ENCODE measurements at regions of chr1 and their contacts with region 1.

Region 1: DNA sequence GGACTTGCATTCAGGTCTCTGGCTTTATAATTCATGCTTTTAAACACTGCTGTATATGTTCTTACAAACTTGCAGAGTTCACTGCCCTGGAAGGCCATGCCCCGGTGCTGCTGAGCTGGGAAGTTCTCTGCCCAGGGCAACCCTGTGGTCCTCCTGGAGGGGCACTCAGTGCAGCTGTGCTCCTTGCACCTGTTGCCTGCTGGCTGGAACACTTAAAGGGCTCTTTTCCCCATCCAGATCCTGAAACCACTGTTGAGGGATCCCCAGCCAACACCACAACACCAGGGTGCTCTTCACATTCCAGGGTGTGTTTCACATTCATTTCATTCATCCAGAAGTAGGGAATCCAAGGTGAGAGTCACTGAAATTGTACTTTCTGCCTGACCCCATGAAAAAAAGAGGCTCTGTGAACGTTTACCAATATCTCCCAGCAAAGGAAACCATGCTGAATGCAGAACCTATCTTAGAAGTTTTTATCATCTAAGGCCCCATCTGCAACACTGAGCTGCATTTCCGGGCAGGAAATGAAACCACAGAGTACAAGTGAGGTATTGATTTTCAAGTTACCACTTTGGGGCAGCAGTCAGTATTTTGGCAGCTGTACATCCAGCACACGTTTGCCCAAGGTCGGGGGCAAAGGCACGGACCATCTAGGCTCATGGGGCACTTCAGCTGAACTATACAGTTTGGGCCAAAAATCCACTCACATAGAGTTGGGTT is 16.4 kb upstream of the KIAA0040 start:
- DNase-seq: peak; percentile 74
- H3K4me3 Mint-ChIP-seq: peak overlapping the region; percentile 51
- H3K27ac Mint-ChIP-seq: peak overlapping the region; percentile 92
- H3K4me1 Mint-ChIP-seq: peaks cover 62% of the 10 kb centered on the region
- H3K27me3 Mint-ChIP-seq: no peaks in the 10 kb centered on the region

Region 2: DNA sequence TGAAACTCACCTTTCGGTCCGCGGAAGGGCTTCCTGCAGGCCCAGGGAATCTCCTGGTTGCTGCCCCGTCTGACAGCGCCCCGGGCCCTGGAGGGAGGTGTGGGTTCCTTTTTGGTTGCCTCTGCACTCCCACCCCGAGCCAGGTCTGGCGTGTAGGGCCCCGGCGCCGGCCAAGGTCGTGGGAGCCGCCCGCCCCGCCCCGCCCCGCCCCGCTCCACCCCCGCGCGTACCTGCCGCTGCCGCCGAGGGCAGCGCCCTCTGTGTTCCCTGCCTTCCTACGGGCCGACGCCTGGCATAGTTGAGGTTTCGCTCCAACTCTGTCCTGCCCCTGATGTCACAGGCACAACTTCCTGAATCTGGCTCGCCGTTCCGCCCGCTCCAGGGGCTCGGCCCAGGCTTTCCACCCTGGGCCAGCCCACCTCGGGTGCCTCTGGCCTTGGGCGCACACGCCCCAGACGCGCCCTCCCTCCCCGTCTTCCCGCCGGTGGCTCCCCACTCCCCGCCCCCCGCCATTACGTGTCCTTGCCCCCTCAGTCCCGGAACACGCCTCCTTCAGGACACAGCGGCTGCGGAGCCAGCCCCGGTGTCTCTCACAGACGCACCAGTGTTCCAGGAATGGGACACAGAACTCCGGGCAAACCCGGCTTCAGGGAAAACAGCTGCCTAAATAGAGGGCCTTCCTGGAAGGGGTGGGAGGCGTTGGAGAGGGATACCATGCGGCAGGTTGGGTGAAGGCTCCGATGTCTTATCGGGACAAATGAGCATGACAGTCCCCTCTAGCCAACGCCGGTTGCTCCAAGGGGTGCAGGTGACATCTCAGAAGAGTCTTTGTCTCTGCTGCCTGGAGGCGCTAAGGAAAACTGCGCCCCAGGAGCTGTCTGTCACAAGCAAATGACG is 16.1 kb before region 1 on chr1 and contains the start of gene KIAA0040:
- CTCF ChIA-PET with region 1: interaction called, 7 read pairs
- intact Hi-C with region 1: loop called (anchors 1 kb)
- DNase-seq: peak; percentile 63
- H3K4me3 Mint-ChIP-seq: peak within 1 kb of the TSS; percentile 92
- H3K27ac Mint-ChIP-seq: peak within 1 kb of the TSS; percentile 93
- H3K4me1 Mint-ChIP-seq: peaks cover 45% of the 10 kb centered on the region
- H3K27me3 Mint-ChIP-seq: no peaks in the 10 kb centered on the region
- total RNA-seq, gene KIAA0040: 19.5 to 21.4 TPM

Region 3: GRCh38 chr1:175237389-175237788 is 28.5 kb after region 1 on chr1:
- CTCF ChIA-PET with region 1: no interaction called
- intact Hi-C with region 1: loop called (anchors 2 kb)
- DNase-seq: no peak
- H3K4me3 Mint-ChIP-seq: no peak overlapping the region
- H3K27ac Mint-ChIP-seq: no peak overlapping the region
- H3K4me1 Mint-ChIP-seq: peaks cover 33% of the 10 kb centered on the region
- H3K27me3 Mint-ChIP-seq: no peaks in the 10 kb centered on the region

Region 4: GRCh38 chr1:175297291-175297690 is 88.4 kb after region 1 on chr1:
- CTCF ChIA-PET with region 1: no interaction called
- intact Hi-C with region 1: loop called (anchors 2 kb)
- DNase-seq: peak; percentile 23
- H3K4me3 Mint-ChIP-seq: no peak overlapping the region
- H3K27ac Mint-ChIP-seq: no peak overlapping the region
- H3K4me1 Mint-ChIP-seq: peaks cover 38% of the 10 kb centered on the region
- H3K27me3 Mint-ChIP-seq: peaks cover 7% of the 10 kb centered on the region

Region 5: GRCh38 chr1:175319418-175320230 is 110.7 kb after region 1 on chr1:
- CTCF ChIA-PET with region 1: interaction called, 4 read pairs
- intact Hi-C with region 1: loop called (anchors 1 kb)
- DNase-seq: peak; percentile 80
- H3K4me3 Mint-ChIP-seq: no peak overlapping the region
- H3K27ac Mint-ChIP-seq: no peak overlapping the region
- H3K4me1 Mint-ChIP-seq: peaks cover 12% of the 10 kb centered on the region
- H3K27me3 Mint-ChIP-seq: no peaks in the 10 kb centered on the region